HepG2 (cell line): ENCODE measurements at regions of chr9 and their contacts with region 1.

Region 1: GRCh38 chr9:4792572-4793458 is at the start of gene RCL1:
- DNase-seq: peak; percentile 88
- ATAC-seq: peak; percentile 97
- H3K4me3 ChIP-seq: peak within 1 kb of the TSS; percentile 71 to 87 (median 73)
- H3K27ac ChIP-seq: peak within 1 kb of the TSS; percentile 88
- H3K4me1 ChIP-seq: peaks cover 48% of the 10 kb centered on the region
- H3K27me3 ChIP-seq: no peaks in the 10 kb centered on the region; a peak in 1 of 5 replicates
- CTCF ChIP-seq: no peak
- EP300 ChIP-seq: peak in 1 of 2 experiments; percentile 65; a peak in 1 of 4 replicates
- POLR2A ChIP-seq: peak; percentile 70 to 72
- RAD21 ChIP-seq: peak; percentile 13; the same call in 1 of the 2 replicates
- total RNA-seq, gene RCL1: 31.6 and 33.9 TPM in 2 replicates

Region 2: DNA sequence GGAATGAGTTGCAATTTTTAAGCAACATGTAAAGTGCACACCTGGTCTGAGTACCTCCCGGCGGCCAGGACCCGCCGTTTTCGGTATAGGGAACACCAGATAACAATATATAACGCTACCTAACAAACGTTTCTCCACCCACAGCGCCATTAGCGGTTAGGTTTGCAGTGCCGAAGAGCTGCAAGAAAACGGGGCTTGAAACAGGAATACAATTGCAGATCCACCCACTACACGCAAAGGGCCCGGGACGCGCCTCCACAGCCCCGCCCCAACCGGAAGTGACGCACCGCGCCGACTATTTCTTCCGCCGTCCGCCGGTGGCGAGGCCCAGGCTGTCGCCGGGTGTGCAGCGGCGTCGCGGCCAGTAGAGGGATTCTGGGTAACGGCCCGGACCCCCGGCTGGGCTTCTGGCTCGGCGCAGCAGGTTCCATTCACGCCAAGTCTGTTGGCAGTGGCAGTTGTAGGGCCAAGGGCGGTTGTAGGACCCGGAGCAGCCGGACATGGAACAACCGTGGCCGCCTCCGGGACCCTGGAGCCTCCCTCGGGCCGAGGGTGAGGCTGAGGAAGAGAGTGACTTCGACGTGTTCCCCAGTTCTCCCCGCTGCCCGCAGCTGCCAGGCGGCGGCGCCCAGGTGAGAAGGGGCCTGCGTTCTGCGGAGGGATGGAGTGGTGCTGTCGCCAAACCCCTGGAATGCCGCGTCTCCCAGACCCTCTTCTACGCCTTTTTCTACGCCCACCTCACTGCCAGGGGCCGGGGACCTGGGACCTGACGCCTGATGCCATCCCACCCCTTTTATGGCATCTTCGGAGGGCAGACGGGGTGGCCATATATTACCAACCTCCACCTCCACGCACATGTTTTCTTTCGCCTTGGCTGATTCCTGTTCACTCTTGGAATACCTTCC is 113.3 kb before region 1 on chr9 and contains the start of gene CDC37L1:
- CTCF ChIA-PET with region 1: no interaction called
- POLR2A ChIA-PET with region 1: interaction called, 3 read pairs
- in situ Hi-C with region 1: no loop called
- intact Hi-C with region 1: loop called (anchors 5 kb)
- DNase-seq: peak; percentile 91
- ATAC-seq: peak; percentile 93
- H3K4me3 ChIP-seq: peak within 1 kb of the TSS; percentile 79 to 94 (median 87)
- H3K27ac ChIP-seq: peak within 1 kb of the TSS; percentile 99
- H3K4me1 ChIP-seq: peaks cover 48% of the 10 kb centered on the region
- H3K27me3 ChIP-seq: no peaks in the 10 kb centered on the region; a peak in 1 of 5 replicates
- CTCF ChIP-seq: peak; percentile 72
- EP300 ChIP-seq: peak; percentile 16 to 17; a peak in 2 of 4 replicates
- POLR2A ChIP-seq: peak; percentile 93 to 95
- RAD21 ChIP-seq: peak; percentile 63
- total RNA-seq, gene CDC37L1: 17.0 and 21.6 TPM in 2 replicates

Region 3: GRCh38 chr9:4837261-4838188 is 44.7 kb after region 1 on chr9:
- CTCF ChIA-PET with region 1: no interaction called
- POLR2A ChIA-PET with region 1: interaction called, 26 read pairs
- in situ Hi-C with region 1: no loop called
- intact Hi-C with region 1: loop called (anchors 1 kb)
- DNase-seq: peak; percentile 81
- ATAC-seq: peak; percentile 54
- H3K4me3 ChIP-seq: peak overlapping the region in 1 of 3 experiments; percentile 31; a peak in 2 of 6 replicates
- H3K27ac ChIP-seq: peak overlapping the region; percentile 75
- H3K4me1 ChIP-seq: peaks cover 100% of the 10 kb centered on the region
- H3K27me3 ChIP-seq: no peaks in the 10 kb centered on the region
- CTCF ChIP-seq: no peak
- EP300 ChIP-seq: 0 out of 4 replicates have a peak, but pooled peaks of 1 of the 2 experiments have one; percentile 33
- POLR2A ChIP-seq: 0 out of 4 replicates have a peak, but pooled peaks of 1 of the 2 experiments have one; percentile 23
- RAD21 ChIP-seq: no peak

Region 4: DNA sequence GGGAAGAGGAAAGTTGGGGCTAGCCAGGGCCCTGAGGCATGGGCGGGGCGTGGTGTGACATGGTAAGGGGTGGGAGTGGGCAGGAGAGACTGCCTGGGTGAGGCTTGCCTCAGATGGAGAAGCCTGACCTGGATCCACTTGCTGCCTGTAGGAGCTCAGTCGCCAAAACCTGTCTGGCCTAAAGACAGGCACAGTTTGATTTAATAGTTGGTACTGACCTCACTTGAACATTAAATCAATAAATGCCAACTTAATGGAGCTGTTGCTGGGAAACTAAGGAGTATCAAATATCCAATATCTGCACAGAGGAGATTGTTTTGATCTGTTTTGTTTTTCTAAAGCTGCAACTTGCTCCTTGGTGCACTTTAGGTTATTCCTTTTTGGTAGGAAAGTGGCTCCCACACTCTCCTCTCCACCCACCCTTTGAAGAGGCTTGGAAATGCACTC is 86.3 kb after region 1 on chr9:
- CTCF ChIA-PET with region 1: no interaction called
- POLR2A ChIA-PET with region 1: no interaction called
- in situ Hi-C with region 1: no loop called
- intact Hi-C with region 1: no loop called
- DNase-seq: no peak
- ATAC-seq: no peak
- H3K4me3 ChIP-seq: no peak overlapping the region
- H3K27ac ChIP-seq: no peak overlapping the region
- H3K4me1 ChIP-seq: no peaks in the 10 kb centered on the region
- H3K27me3 ChIP-seq: no peaks in the 10 kb centered on the region
- CTCF ChIP-seq: no peak
- EP300 ChIP-seq: no peak
- POLR2A ChIP-seq: no peak
- RAD21 ChIP-seq: no peak

Region 5: DNA sequence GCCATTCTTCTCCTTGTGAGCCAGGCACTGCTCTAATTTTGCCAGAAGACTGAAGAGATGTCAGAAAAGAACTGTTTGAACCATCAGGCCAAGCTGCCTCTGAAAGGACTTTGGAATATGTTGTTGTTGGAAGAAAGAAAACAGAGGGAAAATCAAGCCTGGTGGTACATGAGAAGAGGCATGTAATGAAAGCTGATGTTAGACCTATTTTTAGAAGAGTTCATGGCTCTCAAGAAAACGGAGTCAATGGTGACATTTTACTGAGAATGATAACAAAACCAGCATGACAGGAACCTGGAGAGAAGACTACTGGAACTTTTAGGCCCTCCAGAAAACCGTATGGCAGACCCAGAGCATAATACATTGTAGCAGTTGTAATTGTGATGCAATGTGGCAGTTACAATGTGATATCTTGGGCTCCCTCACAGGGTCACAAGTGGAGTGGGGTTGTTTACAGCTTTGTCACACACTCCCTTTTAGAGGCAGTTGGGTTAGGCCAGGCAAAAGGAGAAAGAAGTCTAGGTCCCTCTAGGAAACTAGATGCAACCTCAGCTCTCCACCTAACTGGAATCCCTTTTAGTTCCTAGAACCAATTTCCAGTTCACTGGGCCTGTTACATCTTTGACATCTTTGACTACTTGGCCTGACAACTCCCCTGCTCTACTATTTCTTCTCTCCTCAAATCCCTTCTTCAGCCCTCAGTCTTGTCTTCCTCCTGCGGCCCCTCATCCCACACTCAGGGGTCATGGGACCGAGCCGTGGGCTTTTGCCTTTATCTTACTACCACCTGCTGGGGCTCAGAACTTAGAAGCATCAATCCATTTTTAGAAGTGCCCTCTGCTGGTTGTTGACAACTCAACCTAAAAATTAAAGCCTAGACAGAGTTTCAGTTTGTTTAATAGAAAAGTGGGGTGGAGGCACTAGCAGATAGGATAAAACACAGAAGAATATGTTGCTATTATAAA is 131.0 kb after region 1 on chr9:
- CTCF ChIA-PET with region 1: no interaction called
- POLR2A ChIA-PET with region 1: no interaction called
- in situ Hi-C with region 1: no loop called
- intact Hi-C with region 1: loop called (anchors 10 kb)
- DNase-seq: peak; percentile 51
- ATAC-seq: peak; percentile 81
- H3K4me3 ChIP-seq: no peak overlapping the region
- H3K27ac ChIP-seq: no peak overlapping the region
- H3K4me1 ChIP-seq: no peaks in the 10 kb centered on the region
- H3K27me3 ChIP-seq: no peaks in the 10 kb centered on the region
- CTCF ChIP-seq: peak; percentile 64
- EP300 ChIP-seq: no peak
- POLR2A ChIP-seq: no peak
- RAD21 ChIP-seq: peak; percentile 77; the same call in 1 of the 2 replicates